ENCODE measurements at regions of chr7 and their contacts with region 1.

Region 1: DNA sequence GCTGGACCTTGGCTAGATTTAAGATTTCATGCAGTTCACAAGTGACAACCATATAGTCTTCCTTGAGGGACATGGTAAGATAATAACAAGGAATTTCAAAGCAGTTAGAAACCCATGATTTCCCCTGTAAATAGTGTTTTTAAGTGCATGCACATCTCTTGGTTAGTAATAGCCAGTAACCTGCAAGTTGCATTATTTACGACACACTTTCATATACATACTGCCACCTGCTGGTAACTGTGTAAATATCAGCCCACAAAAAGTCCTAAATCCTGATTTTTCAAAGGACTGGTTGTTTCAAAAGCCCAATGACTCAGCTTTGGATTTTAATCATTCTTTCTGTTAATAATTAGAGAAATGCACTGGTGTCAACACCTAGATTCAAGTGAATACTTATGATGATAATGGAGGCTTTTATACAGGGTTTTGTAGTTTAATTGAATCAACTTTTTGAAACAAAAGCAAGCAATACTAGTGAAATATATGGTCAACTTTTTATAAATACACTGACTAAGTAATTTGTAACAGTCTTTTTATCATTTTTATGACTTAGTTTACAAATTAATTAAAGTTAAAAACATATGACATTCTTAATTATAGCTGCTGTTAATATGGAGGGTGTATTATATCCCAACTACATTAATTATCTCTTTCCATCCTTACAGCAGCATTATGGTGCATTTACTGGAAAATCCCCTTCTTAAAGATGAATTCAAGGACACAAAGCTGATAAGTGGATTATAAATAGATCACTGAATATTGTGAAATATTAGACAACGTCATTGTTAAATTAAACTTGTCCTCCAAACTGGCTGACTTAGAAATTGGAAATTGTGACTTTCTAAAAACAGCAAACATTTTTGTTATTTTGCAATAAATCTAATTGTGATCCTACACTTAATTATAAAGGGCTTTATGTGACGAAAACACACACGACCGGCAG is 367.7 kb upstream of the SEMA3D start:
- DNase-seq: no peak
- ATAC-seq: peak; percentile 72 to 73
- H3K4me3 ChIP-seq: no peak overlapping the region
- H3K27ac ChIP-seq: no peak overlapping the region
- H3K4me1 ChIP-seq: no peaks in the 10 kb centered on the region
- H3K27me3 ChIP-seq: no peaks in the 10 kb centered on the region
- CTCF ChIP-seq: peak; percentile 68

Region 2: DNA sequence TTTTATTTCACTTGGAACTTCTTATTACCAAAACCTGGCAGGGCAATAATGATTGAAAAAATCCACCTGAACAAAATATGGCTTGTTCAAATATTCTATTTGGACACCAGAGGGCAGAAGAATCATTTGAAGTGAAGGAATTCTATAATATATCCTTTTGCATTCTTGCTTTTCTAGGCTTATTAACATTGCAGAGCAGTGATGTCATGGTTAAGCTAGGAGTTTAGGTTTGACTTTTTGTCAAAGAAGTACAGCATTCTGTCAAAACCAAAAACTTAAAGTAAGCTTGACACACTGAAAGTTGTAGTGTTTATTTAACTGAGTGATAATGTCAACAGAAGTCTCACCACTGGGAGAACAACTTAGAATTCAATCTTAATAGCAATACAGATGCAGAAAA is 523.6 kb before region 1 on chr7:
- intact Hi-C with region 1: loop called (anchors 10 kb)
- DNase-seq: no peak
- ATAC-seq: no peak
- H3K4me3 ChIP-seq: no peak overlapping the region
- H3K27ac ChIP-seq: no peak overlapping the region
- H3K4me1 ChIP-seq: no peaks in the 10 kb centered on the region
- H3K27me3 ChIP-seq: no peaks in the 10 kb centered on the region
- CTCF ChIP-seq: peak; percentile 38